ENCODE measurements at regions of chr6 and their contacts with region 1.

Region 1: GRCh38 chr6:1701668-1702353 is 92.1 kb downstream of the FOXC1 start:
- DNase-seq: peak; percentile 25 to 94
- H3K4me3 ChIP-seq: peak overlapping the region in 1 of 2 donors; percentile 28
- H3K27ac ChIP-seq: peak overlapping the region; percentile 83 to 96
- H3K4me1 ChIP-seq: peaks cover 19 to 49% of the 10 kb centered on the region in 2 donors
- H3K27me3 ChIP-seq: no peaks in the 10 kb centered on the region
- CTCF ChIP-seq: no peak

Region 2: DNA sequence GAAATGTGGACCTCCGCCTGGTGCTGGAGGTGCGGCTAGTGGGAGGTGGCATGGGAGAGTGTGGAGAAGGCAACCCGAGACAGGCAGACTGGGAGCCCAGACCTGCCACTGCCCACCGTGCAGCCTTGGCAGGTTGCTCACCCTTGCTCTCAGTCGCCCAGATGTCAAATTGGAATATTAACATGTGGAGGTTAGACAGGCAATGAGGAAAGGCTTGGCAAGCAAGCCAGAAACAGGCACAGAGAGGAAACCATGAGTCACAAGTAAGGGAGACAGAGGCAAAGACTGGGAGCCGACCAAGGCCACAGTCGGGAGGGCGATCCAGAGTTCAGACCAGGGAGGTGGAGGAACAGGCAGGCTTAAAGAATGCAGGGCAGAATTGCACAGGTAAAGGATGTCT is 86.1 kb after region 1 on chr6:
- intact Hi-C with region 1: loop called (anchors 5 kb)
- DNase-seq: peak; percentile 54 to 91
- H3K4me3 ChIP-seq: no peak overlapping the region
- H3K27ac ChIP-seq: peak overlapping the region; percentile 29 to 47
- H3K4me1 ChIP-seq: peaks cover 3 to 16% of the 10 kb centered on the region in 2 donors
- H3K27me3 ChIP-seq: no peaks in the 10 kb centered on the region
- CTCF ChIP-seq: no peak

Region 3: DNA sequence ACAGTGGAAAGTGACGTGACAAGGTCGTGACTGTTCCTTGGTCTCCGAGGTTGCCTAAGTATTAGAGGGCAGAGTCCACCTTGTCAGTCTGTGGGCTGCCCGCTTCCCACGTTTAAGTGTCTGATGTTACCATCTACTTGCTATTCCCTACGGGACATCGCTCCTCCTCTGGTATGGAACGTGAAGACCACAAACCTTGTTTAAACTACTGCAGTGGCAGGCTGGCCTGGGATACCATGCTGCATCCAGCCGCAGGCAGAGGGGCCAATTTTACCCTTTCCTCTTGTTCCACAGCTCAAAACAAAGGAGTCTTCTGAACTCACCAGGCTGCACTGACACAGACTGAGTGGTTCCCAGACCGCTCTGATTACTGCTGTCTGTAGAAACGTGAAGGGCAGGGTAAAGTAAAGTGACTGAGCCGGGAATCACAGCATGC is 183.8 kb after region 1 on chr6:
- intact Hi-C with region 1: loop called (anchors 10 kb)
- DNase-seq: no peak
- H3K4me3 ChIP-seq: peak overlapping the region; percentile 14 to 47
- H3K27ac ChIP-seq: peak overlapping the region; percentile 89 to 92
- H3K4me1 ChIP-seq: peaks cover 6 to 34% of the 10 kb centered on the region in 2 donors
- H3K27me3 ChIP-seq: no peaks in the 10 kb centered on the region
- CTCF ChIP-seq: no peak

Region 4: DNA sequence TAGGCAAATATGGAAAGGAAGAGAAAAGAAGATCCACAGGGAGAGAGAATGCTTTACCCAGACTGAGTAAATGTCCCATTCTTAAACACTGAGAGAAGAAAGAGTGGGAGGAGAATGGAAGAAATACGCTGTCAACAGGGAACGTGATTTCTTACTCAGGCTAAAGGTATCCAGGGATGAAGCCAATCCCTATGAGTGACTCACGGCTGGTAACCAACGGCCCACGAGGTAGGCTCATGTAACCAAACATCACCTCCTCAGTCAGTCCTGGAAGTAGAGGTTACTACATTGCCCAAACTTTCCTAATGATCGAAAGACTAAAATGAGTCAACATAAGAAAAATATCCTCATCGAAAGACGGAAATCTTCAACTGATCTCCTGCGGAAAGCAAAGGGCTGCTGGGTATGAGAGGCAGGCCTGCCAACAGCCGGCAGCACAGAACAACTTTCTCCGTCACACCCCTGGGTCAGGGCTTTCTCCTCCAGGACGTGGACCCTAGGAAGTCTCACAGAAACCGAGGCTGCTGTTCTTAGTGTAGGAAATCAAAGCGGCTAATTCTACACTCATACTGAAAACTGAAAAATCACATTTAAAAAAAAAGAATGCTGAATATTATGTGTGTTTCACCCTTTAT is 251.0 kb after region 1 on chr6:
- intact Hi-C with region 1: loop called (anchors 5 kb)
- DNase-seq: peak in 1 of 2 donors; percentile 76
- H3K4me3 ChIP-seq: no peak overlapping the region
- H3K27ac ChIP-seq: peak overlapping the region; percentile 52 to 66
- H3K4me1 ChIP-seq: peaks cover 0 to 3% of the 10 kb centered on the region in 2 donors
- H3K27me3 ChIP-seq: no peaks in the 10 kb centered on the region
- CTCF ChIP-seq: no peak